Head of caudate nucleus (tissue), 42 donors: ENCODE measurements at regions of chr7 and their contacts with region 1.

Region 1: DNA sequence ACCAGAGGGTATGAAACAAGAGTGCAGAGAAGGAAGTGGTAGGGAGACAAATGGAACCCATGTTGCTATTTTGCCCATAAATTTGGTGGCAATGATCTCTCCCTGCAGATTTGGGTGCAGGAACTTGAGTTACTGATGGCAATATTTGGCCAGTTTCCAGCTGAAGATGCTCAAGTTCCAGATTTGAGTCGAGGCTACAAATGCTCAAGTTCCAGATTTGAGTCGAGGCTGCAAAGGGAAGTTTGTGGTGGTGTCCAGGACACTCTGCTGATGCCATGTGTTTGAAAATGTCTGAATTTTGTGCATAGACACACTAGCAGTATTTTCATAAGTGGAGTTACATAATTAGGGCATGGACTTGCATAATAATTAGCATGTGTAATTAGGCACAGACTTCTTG is 40.8 kb downstream of the TBXAS1 start:
- DNase-seq: peak in 1 of 42 donors; percentile 41

Region 2: DNA sequence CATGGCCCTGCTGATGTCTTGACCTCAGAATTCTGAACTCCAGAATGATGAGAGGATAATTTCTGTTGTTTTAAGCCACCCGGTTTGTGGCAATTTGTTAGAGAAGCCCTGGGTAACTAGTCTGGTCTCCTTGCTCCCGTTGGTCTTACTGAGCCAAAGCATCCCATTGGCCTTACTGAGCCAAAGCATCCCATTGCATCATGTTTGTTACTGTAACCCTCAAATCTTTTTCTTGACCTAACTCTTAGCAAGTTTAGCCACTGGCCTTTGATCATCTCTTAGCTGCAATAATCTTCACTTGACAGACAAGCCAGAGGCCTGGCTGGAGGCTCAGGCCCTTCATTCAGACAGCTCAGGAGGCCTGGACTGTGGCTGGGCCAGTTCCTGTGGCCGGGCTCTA is 19.0 kb before region 1 on chr7:
- intact Hi-C with region 1: loop called (anchors 2 kb)
- DNase-seq: no peak